ENCODE measurements at regions of chr3 and their contacts with region 1.

Region 1: DNA sequence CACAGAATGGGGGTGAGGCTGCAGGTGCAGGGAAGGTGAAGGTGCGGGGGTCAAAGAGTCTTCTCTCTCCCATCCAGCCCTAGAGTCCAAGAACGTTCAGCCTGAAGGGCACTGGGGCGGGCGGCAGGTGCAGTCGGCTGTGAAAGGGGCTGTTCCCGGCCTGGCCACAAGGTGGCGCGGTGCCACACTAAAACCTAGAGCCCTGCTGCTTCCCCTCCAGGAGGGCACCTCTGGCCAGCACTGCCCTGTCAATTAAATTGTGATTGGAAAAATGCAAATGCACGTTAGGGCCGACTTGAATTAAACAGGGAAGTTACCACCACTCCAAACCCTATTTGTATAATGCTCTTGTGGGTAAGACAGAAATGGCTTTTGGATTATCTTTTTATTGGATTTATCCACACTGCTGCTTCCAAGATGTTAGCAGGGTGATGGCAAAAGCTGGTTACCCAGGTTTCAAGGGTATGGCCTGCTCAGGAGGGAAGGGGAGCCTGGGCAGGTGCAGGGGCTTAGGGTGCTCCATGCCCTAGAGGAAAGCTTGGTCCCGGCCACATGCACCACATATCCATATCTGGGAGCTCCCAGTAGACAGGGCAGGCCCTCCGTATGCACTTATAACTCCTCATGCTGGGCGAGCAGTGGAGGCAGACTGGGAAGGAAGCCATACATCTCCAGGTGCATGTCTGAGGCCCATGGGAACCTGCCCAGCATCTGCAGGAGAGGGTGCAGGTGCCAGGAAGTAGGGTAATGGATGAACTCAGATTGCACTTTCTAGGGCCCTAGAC is 119.8 kb downstream of the ADCY5 start:
- DNase-seq: peak; percentile 83 to 94
- ATAC-seq: peak; percentile 79
- H3K4me3 ChIP-seq: no peak overlapping the region
- H3K27ac ChIP-seq: peak overlapping the region in 1 of 2 donors; percentile 95
- H3K4me1 ChIP-seq: no peaks in the 10 kb centered on the region
- H3K27me3 ChIP-seq: no peaks in the 10 kb centered on the region

Region 2: GRCh38 chr3:123365450-123366143 is 36.6 kb after region 1 on chr3:
- intact Hi-C with region 1: loop called in 1 of 2 experiments (anchors 5 kb)
- DNase-seq: no peak
- ATAC-seq: no peak
- H3K4me3 ChIP-seq: no peak overlapping the region
- H3K27ac ChIP-seq: peak overlapping the region in 1 of 2 donors; percentile 21
- H3K4me1 ChIP-seq: no peaks in the 10 kb centered on the region
- H3K27me3 ChIP-seq: no peaks in the 10 kb centered on the region

Region 3: DNA sequence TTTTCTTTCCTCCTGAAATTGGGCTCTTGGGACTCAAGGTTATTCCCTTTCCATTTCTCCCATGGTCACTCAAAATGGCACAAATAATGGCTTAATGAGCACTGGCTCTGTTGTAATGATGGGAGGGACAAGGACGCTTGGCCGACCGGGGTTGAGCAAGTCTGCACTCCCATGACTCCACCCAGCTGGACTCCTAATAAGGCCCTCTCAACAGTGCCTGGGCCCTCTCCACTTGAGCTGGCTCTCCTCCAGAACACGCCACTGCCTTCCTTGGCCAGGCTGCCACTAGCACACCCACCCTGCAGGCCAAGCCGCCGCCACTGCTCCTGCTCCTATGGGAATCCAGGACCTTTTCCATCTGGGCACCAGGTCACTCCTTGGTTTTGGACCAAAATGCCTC is 77.6 kb after region 1 on chr3:
- intact Hi-C with region 1: loop called in 1 of 2 experiments (anchors 5 kb)
- DNase-seq: peak; percentile 91 to 93
- ATAC-seq: peak; percentile 85
- H3K4me3 ChIP-seq: no peak overlapping the region
- H3K27ac ChIP-seq: peak overlapping the region; percentile 36 to 98
- H3K4me1 ChIP-seq: peaks cover 0 to 4% of the 10 kb centered on the region in 2 donors
- H3K27me3 ChIP-seq: no peaks in the 10 kb centered on the region

Region 4: GRCh38 chr3:123489400-123490004 is 160.5 kb after region 1 on chr3:
- intact Hi-C with region 1: loop called (anchors 1 to 2 kb)
- DNase-seq: peak; percentile 75 to 88
- ATAC-seq: peak; percentile 91
- H3K4me3 ChIP-seq: no peak overlapping the region
- H3K27ac ChIP-seq: peak overlapping the region in 1 of 2 donors; percentile 86
- H3K4me1 ChIP-seq: peaks cover 0 to 2% of the 10 kb centered on the region in 2 donors
- H3K27me3 ChIP-seq: no peaks in the 10 kb centered on the region